IMR-90 (cell line): ENCODE measurements at regions of chr6 and their contacts with region 1.

Region 1: DNA sequence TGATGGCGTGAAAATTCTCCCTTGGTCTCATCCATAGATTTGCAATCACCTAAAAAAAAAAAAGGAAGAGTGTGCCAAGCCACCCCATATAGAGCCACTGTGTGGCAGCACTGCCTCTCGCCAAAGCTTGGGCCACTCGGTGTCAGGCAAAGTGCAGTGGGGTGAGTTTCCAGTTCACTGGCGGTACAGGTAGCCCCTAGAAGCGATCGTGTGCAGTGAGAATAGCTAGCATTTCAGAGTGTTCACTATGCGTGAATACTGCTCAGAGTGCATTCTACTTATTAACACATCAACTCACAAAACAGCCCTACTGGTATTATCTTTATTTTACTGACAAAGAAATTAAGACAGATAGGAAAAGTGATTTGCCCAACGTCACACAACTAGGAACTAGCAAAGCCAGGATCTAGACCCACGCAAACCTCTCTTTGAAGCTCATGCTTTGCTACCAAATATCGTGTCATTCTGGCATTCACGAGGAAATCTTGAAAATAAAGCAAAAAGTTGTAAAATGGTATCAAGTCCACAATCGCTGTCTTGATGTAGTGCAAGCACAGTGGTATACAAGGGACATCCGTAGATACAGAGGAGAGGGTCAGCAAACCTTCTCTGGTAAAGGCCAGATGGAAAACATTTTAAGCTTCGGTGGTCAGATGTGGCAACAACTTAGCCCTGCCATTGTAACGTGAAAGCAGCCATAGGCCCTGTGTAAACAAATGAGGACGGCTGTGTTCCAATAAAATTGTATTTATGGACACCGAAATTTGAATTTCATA is 10.4 kb upstream of the GCNT2 start:
- DNase-seq: peak; percentile 15
- ATAC-seq: peak; percentile 92
- H3K4me3 ChIP-seq: no peak overlapping the region
- H3K27ac ChIP-seq: no peak overlapping the region
- H3K4me1 ChIP-seq: no peaks in the 10 kb centered on the region
- H3K27me3 ChIP-seq: no peaks in the 10 kb centered on the region
- CTCF ChIP-seq: peak; percentile 48
- POLR2A ChIP-seq: no peak
- RAD21 ChIP-seq: peak; percentile 61

Region 2: DNA sequence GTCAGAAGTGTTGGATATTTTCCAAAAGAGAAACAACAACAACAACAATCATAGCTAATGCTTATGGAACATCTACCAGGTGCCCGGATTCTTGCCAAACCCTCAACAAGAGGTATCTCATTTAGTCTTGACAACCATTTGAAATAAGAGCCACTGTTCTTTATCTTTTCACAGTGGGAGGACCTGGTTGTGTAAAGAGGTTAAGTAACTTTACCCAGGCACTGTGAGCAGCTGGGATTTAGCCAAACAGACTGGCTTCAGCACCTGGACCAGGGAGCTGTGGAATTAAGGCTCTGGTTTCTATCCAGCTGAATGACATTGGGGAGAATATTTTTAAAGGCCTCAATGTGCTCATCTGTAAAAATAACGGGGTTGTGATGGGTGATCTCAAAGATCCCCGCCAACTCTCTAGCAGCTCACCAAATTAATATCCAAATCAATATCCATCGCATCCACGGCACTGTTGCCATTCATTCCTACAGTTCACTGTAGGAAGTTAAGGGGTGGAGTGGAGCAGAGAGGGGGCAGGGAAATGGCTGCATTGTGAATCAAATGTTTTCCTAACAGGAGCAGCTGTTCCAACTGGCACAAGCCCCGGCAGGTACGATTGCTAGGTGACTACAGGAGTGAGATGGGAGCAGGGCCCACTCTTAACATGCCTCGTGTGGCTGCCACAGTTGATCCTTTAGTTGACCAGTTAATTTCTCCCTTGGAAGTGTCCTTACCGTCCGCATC is 72.2 kb after region 1 on chr6:
- CTCF ChIA-PET with region 1: no interaction called
- POLR2A ChIA-PET with region 1: no interaction called
- dilution Hi-C with region 1: no loop called
- in situ Hi-C with region 1: no loop called
- intact Hi-C with region 1: no loop called
- DNase-seq: no peak
- ATAC-seq: no peak
- H3K4me3 ChIP-seq: no peak overlapping the region
- H3K27ac ChIP-seq: no peak overlapping the region
- H3K4me1 ChIP-seq: no peaks in the 10 kb centered on the region
- H3K27me3 ChIP-seq: no peaks in the 10 kb centered on the region; the same call in 1 of the 2 replicates
- CTCF ChIP-seq: no peak
- POLR2A ChIP-seq: no peak
- RAD21 ChIP-seq: no peak

Region 3: DNA sequence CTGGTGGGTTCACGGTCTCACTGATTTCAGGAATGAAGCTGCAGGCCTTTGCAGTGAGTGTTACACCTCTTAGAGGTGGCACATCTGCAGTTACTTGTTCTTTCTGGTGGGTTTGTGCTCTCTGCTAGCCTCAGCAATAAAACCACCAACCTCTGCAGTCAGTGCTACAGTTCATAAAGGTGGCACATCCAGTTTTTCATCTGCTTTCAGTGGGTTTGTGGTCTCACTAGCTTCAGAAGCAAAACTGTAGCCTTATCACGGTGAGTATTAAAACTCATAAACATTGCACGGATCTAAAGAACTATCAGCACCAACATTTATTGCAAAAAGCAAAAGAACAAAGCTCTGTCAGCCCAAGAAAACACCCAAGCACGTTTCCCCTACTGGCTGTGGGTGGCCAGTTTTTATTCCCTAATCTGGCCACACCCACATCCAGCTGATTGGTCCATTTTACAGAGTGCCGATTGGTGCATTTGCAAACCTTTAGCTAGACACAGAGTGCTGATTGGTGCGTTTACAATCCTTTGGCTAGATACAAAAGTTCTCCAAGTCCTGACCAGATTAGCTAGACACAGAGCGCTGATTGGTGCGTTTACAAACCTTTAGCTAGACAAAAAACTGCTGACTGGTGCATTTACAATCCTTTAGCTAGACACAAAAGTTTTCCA is 208.7 kb after region 1 on chr6:
- CTCF ChIA-PET with region 1: no interaction called
- POLR2A ChIA-PET with region 1: no interaction called
- dilution Hi-C with region 1: no loop called
- in situ Hi-C with region 1: no loop called
- intact Hi-C with region 1: no loop called
- DNase-seq: no peak
- ATAC-seq: no peak
- H3K4me3 ChIP-seq: peak overlapping the region; percentile 76; the same call in 1 of the 2 replicates
- H3K27ac ChIP-seq: peak overlapping the region; percentile 76; the same call in 1 of the 2 replicates
- H3K4me1 ChIP-seq: peaks cover 8% of the 10 kb centered on the region
- H3K27me3 ChIP-seq: no peaks in the 10 kb centered on the region
- CTCF ChIP-seq: no peak
- POLR2A ChIP-seq: no peak
- RAD21 ChIP-seq: no peak

Region 4: GRCh38 chr6:10759312-10759839 is 248.6 kb after region 1 on chr6:
- CTCF ChIA-PET with region 1: no interaction called
- POLR2A ChIA-PET with region 1: no interaction called
- dilution Hi-C with region 1: no loop called
- in situ Hi-C with region 1: no loop called
- intact Hi-C with region 1: loop called (anchors 1 kb)
- DNase-seq: peak; percentile 96
- ATAC-seq: peak; percentile 80
- H3K4me3 ChIP-seq: no peak overlapping the region
- H3K27ac ChIP-seq: no peak overlapping the region
- H3K4me1 ChIP-seq: peaks cover 2% of the 10 kb centered on the region
- H3K27me3 ChIP-seq: no peaks in the 10 kb centered on the region
- CTCF ChIP-seq: peak; percentile 60
- POLR2A ChIP-seq: no peak
- RAD21 ChIP-seq: peak; percentile 54